ENCODE measurements at regions of chr20 and their contacts with region 1.

Region 1: GRCh38 chr20:49484180-49485140 is 2.0 kb upstream of the KCNB1 start:
- DNase-seq: peak; percentile 95

Region 2: DNA sequence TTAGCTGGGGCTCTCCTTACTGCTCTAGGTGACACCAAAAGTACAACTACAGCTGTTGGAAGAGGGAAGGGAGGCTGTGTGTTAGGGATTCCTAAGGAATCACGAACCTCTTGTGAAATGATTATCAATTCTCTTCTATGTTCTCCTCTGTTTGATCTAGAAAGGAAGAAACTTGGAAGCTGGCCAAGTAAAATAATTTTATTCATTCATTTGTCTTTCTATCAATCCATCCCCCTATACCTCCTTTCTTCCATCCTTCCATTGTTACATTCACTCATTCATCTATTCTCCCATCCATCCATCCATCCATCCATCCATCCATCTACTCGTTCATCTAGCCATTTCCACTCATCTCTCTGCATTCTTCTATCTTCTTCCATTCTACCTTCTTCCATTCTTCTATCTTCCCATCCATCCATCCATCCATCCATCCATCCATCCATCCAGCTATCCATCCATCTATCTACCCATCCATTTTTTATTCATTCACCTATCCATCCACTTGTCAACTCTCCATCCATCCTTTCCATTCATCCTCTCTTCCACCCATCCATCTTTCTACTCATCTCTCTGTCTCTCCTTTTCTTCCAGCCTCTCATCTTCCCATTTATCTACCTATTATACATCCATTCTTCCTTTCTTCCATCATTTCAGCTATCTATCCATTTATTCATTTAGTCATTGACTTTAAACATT is 153.8 kb before region 1 on chr20:
- intact Hi-C with region 1: loop called (anchors 2 to 5 kb)
- DNase-seq: no peak

Region 3: DNA sequence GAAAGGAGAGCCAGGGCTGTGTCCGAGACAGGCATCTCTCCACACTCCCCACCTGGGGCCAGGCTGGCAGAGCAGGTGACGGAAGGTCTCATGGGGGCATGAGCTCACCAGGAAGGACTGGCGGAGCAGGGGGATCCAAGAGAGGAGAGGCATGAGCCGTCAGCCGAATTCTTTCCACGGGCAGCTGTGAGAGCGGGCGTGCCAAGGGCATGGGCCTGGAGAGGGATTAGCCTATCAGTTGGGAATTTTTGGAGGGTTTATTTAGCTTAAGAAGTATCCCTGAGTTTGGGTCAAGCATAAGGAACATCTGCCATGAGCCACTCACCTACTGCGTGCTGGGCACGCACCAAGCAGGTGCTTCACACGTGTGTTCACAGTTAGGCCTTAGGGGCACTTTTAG is 146.4 kb before region 1 on chr20:
- intact Hi-C with region 1: loop called (anchors 2 to 5 kb)
- DNase-seq: peak; percentile 57

Region 4: DNA sequence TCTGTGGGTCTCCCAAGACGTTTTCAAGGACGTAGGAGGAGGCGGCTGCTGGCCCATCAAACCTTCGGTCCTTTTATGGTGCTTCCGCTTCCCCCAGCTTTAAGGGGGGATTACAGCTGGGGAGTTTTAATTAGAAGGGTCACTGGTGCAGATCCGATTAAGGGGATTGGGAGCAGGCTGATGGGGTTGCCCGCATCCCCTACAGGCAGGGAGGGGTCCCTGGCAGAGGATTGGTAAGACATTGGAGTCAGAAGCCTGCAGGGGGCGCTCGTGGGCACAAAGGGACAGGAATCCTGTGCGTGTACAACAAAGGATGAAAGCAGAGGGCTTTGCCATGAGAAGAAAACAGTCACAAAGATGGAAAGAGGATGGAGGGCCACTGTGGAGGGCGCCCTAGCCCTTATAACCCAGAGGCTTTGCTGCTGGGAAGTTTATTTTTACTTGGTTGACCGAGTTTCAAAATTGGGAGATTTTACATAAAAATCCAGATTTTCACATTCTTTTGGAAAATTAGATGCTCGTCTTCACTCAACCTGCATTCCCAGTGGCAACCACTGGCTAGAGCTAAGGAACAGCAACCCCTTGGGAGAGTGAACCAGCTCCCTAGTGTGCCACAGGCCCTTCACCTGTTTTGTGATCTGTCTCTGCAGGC is 99.9 kb before region 1 on chr20:
- intact Hi-C with region 1: loop called in 1 of 2 experiments (anchors 5 kb)
- DNase-seq: peak; percentile 89

Region 5: GRCh38 chr20:49460916-49461315 is 23.5 kb before region 1 on chr20:
- intact Hi-C with region 1: no loop called
- DNase-seq: no peak